Left ventricle myocardium inferior (tissue), 1 donor: ENCODE measurements at regions of chr12 and their contacts with region 1.

Region 1: GRCh38 chr12:108803428-108804105 is 53.8 kb downstream of the SSH1 start:
- DNase-seq: peak; percentile 51
- H3K4me3 ChIP-seq: peak overlapping the region; percentile 53
- H3K27ac ChIP-seq: peak overlapping the region; percentile 92
- H3K4me1 ChIP-seq: peaks cover 92% of the 10 kb centered on the region
- H3K27me3 ChIP-seq: no peaks in the 10 kb centered on the region
- CTCF ChIP-seq: peak; percentile 97

Region 2: GRCh38 chr12:108664338-108665258 is 139.0 kb before region 1 on chr12:
- intact Hi-C with region 1: loop called (anchors 5 kb)
- DNase-seq: peak; percentile 76
- H3K4me3 ChIP-seq: no peak overlapping the region
- H3K27ac ChIP-seq: peak overlapping the region; percentile 86
- H3K4me1 ChIP-seq: peaks cover 59% of the 10 kb centered on the region
- H3K27me3 ChIP-seq: no peaks in the 10 kb centered on the region
- CTCF ChIP-seq: peak; percentile 96

Region 3: GRCh38 chr12:108856428-108857157 is 53.0 kb after region 1 on chr12:
- intact Hi-C with region 1: loop called (anchors 10 kb)
- DNase-seq: peak; percentile 83
- H3K4me3 ChIP-seq: peak overlapping the region; percentile 84
- H3K27ac ChIP-seq: peak overlapping the region; percentile 98
- H3K4me1 ChIP-seq: peaks cover 72% of the 10 kb centered on the region
- H3K27me3 ChIP-seq: no peaks in the 10 kb centered on the region
- CTCF ChIP-seq: no peak